Activated CD4-positive, alpha-beta memory T cell treated with anti-CD3 and anti-CD28 coated beads for 36 hours (primary cell): ENCODE measurements at regions of chr9 and their contacts with region 1.

Region 1: DNA sequence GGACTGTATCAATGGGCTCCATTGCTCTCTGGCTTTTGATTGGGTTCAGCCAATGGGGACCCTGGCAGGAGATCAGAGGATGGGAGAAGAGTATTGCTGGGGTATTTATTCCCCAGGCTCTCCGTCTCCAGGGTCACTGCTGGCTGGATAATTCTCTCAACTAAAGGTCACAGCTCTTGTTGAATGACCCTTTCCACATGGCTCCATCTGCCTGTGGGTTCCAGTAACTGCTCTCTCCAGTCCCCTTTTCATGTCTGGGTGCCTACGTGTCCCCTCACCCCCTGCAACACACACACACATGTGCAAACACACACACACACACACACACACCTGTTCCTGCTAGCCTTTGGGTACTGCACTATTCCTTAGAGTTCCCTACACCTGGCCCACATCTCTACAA is 53.9 kb upstream of the RIC1 start:
- DNase-seq: no peak
- H3K4me3 Mint-ChIP-seq: no peak overlapping the region
- H3K27ac Mint-ChIP-seq: no peak overlapping the region
- H3K4me1 Mint-ChIP-seq: peaks cover 23% of the 10 kb centered on the region
- H3K27me3 Mint-ChIP-seq: no peaks in the 10 kb centered on the region

Region 2: DNA sequence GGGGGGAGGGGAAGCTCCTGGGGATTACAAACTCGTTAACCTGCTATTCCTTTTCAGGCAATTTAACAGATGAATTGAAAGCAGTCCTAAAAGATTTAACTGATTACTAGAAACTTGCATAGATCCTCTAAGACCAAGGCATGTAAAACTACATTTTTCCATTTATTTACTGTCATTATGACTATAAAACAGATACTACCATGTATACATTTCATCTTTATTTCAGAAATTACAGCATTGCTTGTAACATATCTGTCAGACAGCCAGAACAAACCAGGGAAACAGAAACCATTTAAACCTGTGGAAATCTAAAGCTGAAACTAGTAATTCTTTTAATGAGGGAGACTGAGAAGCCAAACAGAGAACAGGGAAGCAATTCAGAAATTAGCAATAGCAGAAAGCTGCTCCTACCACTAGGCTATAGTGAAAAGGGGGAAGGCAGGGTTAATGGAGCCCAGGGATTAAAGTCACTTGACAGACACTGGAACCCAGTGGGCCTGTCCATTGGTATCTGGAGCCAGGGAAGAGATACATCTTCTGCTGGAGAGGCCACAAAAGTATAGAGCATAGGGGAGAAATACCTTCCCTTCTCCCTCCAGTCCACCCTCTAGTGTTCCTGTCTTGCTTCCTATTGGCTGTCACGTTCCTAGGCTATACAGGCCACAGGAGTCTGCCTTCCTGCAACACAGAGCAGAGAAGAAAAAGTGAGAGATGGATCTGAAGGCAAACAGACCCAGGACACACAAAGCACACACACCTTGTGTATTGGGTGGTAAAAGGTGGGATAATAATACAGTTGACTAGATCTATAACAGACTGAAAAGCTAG is 30.9 kb before region 1 on chr9:
- CTCF ChIA-PET with region 1: no interaction called
- POLR2A ChIA-PET with region 1: interaction called, 3 read pairs
- intact Hi-C with region 1: loop called (anchors 5 kb)
- DNase-seq: no peak
- H3K4me3 Mint-ChIP-seq: no peak overlapping the region
- H3K27ac Mint-ChIP-seq: no peak overlapping the region
- H3K4me1 Mint-ChIP-seq: peaks cover 22% of the 10 kb centered on the region
- H3K27me3 Mint-ChIP-seq: no peaks in the 10 kb centered on the region

Region 3: DNA sequence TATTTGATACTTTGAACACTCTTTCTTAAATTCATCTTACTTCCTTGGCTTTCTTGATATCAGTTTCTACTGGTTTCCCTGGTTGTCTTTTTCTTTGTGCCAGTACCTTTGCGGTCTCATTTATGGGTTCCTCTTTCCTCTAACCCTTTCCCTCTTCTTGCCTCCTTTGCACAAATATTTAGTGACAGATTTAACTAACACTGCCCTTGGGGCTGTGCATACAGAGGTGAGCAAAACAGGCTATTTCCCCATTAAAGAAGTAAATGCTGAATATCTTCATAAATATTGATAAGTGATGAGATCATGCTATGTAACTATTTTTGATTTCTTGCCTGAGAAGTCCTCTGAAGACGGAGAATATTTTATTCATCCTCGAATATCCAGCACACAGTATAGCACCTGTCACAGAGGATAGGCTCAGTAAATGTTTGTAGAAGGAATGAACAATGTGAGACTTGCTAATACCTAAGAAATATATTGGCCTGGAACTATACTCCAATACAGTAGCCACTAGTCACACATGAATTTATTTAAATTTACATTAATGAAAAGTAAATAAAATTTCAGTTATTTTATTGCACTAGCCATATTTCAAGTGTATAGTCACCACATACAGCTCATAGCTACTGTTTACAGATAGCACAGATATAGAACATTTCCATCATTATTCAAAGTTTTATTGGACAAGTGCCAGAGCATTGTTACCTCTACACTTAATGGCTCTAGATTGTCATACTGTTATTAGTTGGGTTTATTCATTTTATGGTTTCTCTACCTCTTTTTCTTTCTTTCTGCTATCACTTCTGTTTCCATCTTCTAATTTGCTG is 144.3 kb after region 1 on chr9:
- CTCF ChIA-PET with region 1: no interaction called
- POLR2A ChIA-PET with region 1: no interaction called
- intact Hi-C with region 1: no loop called
- DNase-seq: no peak
- H3K4me3 Mint-ChIP-seq: no peak overlapping the region
- H3K27ac Mint-ChIP-seq: no peak overlapping the region
- H3K4me1 Mint-ChIP-seq: peaks cover 8% of the 10 kb centered on the region
- H3K27me3 Mint-ChIP-seq: no peaks in the 10 kb centered on the region